AG04450 (cell line): ENCODE measurements at regions of chr4 and their contacts with region 1.

Region 1: GRCh38 chr4:122577808-122578781 is 42.8 kb downstream of the IL21 start:
- DNase-seq: no peak
- H3K4me3 ChIP-seq: no peak overlapping the region
- H3K27ac ChIP-seq: no peak overlapping the region
- H3K27me3 ChIP-seq: peaks cover 3% of the 10 kb centered on the region
- CTCF ChIP-seq: peak; percentile 76

Region 2: DNA sequence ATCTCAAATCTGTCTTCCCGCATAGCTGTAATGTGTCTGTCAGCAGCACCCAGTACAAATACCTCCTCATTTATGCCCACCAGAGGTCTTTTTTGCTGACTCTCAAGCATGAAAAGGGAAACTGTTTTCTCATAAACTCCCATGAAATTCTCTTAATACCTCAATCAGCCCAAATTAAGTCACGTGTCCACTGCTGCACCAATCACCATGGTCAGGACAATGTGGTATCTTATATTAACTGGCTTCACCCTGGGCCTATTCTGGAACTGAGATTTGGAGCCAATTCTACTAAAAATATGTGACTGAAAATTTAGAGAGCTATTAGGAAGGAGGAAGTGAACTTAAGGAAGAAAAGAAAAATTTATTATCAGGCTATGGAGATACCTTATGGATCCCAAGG is 15.6 kb before region 1 on chr4:
- CTCF ChIA-PET with region 1: interaction called, 10 read pairs
- POLR2A ChIA-PET with region 1: no interaction called
- DNase-seq: no peak
- H3K4me3 ChIP-seq: no peak overlapping the region
- H3K27ac ChIP-seq: no peak overlapping the region
- H3K27me3 ChIP-seq: peaks cover 4% of the 10 kb centered on the region
- CTCF ChIP-seq: no peak

Region 3: DNA sequence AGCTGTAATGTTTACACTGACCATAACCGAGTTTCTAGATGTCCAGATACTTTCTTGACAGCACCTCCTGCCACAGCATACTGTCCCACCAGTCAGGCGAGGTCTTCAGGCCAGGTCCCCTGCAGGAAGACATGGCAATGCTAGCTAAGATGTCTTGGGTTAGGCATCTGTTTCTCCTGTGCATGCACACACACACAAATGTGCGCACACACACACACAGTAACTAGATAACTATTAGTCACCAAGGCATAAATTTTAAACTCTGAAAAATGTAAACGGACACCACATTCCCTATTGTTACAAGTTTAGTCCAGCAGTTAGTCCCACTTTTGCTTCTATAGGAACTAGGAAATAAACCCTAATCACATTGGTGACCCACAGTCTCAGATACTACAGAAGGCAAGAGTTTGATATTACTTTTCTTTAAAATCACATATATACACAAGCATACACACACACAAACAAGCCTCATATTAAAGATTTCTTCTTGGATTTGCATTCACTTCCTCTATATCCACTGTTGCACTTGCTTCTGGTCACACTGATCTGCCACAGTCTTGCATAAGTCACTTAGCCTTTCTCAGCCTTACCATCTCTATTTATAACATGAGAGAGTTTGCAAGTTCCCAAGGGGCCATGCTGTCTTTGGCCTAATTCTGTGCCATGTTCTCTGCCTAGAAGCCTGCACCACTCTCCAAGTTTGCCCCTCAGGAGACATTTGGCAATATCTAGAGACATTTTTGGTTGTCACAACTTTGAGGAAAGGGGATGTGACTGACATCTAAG is 10.6 kb after region 1 on chr4:
- CTCF ChIA-PET with region 1: interaction called, 12 read pairs
- POLR2A ChIA-PET with region 1: no interaction called
- DNase-seq: peak; percentile 45
- H3K4me3 ChIP-seq: no peak overlapping the region
- H3K27ac ChIP-seq: no peak overlapping the region
- H3K27me3 ChIP-seq: no peaks in the 10 kb centered on the region
- CTCF ChIP-seq: no peak

Region 4: GRCh38 chr4:122673252-122673651 is 95.2 kb after region 1 on chr4:
- CTCF ChIA-PET with region 1: no interaction called
- POLR2A ChIA-PET with region 1: no interaction called
- DNase-seq: no peak
- H3K4me3 ChIP-seq: no peak overlapping the region
- H3K27ac ChIP-seq: no peak overlapping the region
- H3K27me3 ChIP-seq: no peaks in the 10 kb centered on the region
- CTCF ChIP-seq: no peak

Region 5: GRCh38 chr4:122930862-122931261 is 352.8 kb after region 1 on chr4:
- CTCF ChIA-PET with region 1: interaction called, 21 read pairs
- POLR2A ChIA-PET with region 1: no interaction called
- DNase-seq: no peak
- H3K4me3 ChIP-seq: no peak overlapping the region
- H3K27ac ChIP-seq: no peak overlapping the region
- H3K27me3 ChIP-seq: no peaks in the 10 kb centered on the region
- CTCF ChIP-seq: peak; percentile 50